ENCODE measurements at regions of chr7 and their contacts with region 1.

Region 1: GRCh38 chr7:35463751-35464150 is 209.9 kb upstream of the TBX20 start:
- DNase-seq: no peak
- H3K4me3 ChIP-seq: no peak overlapping the region
- H3K27ac ChIP-seq: no peak overlapping the region
- H3K4me1 ChIP-seq: peaks cover 10% of the 10 kb centered on the region
- CTCF ChIP-seq: no peak

Region 2: GRCh38 chr7:34652809-34653208 is 810.9 kb before region 1 on chr7:
- CTCF ChIA-PET with region 1: no interaction called
- POLR2A ChIA-PET with region 1: no interaction called
- intact Hi-C with region 1: no loop called
- DNase-seq: no peak
- H3K4me3 ChIP-seq: no peak overlapping the region
- H3K27ac ChIP-seq: no peak overlapping the region
- H3K4me1 ChIP-seq: no peaks in the 10 kb centered on the region
- CTCF ChIP-seq: no peak

Region 3: GRCh38 chr7:35450456-35451214 is 13.1 kb before region 1 on chr7:
- CTCF ChIA-PET with region 1: no interaction called
- POLR2A ChIA-PET with region 1: interaction called, 3 read pairs
- intact Hi-C with region 1: loop called (anchors 1 kb)
- DNase-seq: no peak
- H3K4me3 ChIP-seq: no peak overlapping the region
- H3K27ac ChIP-seq: no peak overlapping the region
- H3K4me1 ChIP-seq: no peaks in the 10 kb centered on the region
- CTCF ChIP-seq: no peak